AG04449 (cell line): ENCODE measurements at regions of chr2 and their contacts with region 1.

Region 1: DNA sequence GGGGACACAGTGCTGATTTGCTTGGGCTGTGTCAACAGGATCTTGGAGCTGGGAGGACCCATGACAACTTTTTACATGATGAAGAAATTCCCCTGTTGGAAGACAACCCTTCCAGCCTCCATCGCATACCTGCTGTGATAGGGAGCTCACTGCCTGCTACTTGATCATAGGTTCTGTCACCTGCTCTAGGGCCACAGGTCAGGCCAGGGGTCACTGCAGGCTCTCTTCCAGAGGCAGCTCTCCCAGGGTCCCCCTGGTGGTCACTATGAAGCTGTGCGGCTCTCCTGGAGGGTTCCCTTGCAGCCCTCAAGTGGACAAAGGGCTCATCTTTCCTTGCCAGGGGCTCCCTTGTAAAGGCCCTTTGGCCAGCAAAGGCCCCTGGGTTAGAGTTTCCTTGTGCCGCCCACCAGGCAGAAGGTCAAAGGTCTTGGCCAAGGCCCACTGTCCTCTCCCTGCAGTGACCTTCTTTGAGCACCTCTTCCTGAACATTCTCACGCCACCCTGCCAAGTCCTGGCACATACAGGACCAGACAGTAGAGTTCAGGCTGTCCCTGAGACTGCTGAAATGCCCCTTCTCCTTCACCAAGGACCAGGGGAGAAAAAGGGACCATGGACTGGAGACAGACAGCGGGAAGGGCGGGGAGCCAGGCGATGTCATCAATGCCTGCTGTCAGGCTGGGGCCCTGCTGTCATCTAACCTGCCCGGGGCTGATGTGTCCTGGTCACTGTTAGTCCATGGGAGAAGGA is 345.1 kb downstream of the DYSF start:
- DNase-seq: no peak
- H3K4me3 ChIP-seq: no peak overlapping the region
- CTCF ChIP-seq: peak; percentile 81

Region 2: DNA sequence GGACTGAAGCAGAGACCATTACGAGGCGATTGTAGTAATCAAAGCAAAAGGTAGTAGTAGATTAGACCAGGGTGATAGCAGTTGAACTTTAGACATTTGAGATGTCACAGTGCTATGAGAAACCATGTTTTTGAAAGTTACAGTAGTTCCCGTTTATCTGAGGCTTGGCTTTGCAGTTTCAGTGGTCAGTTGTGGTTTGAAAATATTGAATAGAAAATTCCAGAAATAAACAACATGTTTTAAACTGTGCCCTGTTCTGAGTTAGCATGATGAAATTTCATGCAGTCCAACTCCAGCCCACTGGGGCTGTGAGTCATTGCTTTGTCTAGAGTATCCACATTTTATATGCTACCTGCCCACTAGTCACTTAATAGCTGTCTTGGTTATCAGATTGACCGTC is 419.4 kb before region 1 on chr2:
- CTCF ChIA-PET with region 1: no interaction called
- POLR2A ChIA-PET with region 1: no interaction called
- DNase-seq: peak; percentile 21
- H3K4me3 ChIP-seq: no peak overlapping the region
- CTCF ChIP-seq: no peak

Region 3: GRCh38 chr2:71536226-71536671 is 262.2 kb before region 1 on chr2:
- CTCF ChIA-PET with region 1: interaction called, 15 read pairs
- POLR2A ChIA-PET with region 1: no interaction called
- DNase-seq: peak; percentile 47
- H3K4me3 ChIP-seq: no peak overlapping the region
- CTCF ChIP-seq: no peak

Region 4: DNA sequence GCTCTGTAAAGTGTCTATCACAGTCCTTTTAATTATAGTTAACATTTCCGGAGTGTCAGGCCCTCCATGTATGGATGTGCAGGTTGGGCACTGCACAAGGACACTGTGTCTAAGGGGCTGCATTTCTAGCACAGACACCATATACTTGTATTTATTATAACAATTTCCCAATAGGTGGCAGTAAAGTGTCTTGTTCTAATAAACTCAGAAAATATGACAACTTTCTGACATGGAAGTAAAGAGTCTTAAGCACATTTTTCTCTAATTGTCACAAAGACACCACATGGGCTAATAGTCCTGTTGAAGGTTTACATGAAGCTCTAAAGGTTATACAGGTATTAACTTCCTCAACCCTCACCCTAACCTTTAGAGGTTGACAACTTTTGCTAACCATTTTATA is 188.5 kb before region 1 on chr2:
- CTCF ChIA-PET with region 1: interaction called, 276 read pairs
- POLR2A ChIA-PET with region 1: no interaction called
- DNase-seq: peak; percentile 7
- H3K4me3 ChIP-seq: no peak overlapping the region
- CTCF ChIP-seq: peak; percentile 23

Region 5: DNA sequence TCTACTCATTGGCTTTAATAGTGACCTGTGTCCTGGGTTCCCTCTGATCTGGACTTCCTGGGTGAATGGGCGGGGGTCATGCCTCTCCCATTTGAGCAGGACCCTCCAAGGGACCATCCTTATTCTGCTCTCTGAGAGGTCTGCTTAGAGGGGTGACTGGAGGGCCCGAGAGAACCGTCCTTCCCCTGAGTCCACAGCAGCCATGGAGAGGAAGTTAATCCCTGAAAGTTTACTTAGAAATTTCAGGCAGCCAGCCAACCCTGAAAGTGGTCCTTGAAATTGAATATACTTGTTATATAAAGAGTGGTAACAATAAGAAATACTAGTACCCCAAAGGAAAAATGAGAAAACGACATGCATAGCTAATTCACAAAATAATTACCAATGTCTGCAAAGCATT is 118.9 kb before region 1 on chr2:
- CTCF ChIA-PET with region 1: no interaction called
- POLR2A ChIA-PET with region 1: no interaction called
- DNase-seq: no peak
- H3K4me3 ChIP-seq: no peak overlapping the region
- CTCF ChIP-seq: no peak

Region 6: GRCh38 chr2:71691747-71692501 is 106.5 kb before region 1 on chr2:
- CTCF ChIA-PET with region 1: interaction called, 17 read pairs
- POLR2A ChIA-PET with region 1: no interaction called
- DNase-seq: no peak
- H3K4me3 ChIP-seq: no peak overlapping the region
- CTCF ChIP-seq: peak; percentile 14

Region 7: DNA sequence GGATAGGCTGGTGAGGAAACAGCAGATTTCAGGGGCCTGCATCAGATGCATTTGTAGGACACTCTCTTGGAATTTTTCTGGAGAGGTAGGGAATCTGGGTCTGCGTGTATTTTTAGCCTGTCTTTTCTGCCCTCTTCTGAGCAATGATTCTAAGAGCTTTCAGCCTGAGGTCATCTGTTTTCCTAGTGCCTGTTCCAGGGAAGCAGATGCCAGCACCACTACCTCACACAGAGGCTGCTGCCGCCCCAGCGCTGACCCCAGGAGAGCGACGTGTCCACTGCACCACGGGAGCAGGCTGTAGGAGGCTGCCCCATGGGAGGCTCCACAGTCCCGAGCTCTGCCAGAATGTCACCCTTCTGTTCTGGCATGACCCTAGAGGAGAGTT is 32.7 kb after region 1 on chr2:
- CTCF ChIA-PET with region 1: interaction called, 37 read pairs
- POLR2A ChIA-PET with region 1: no interaction called
- DNase-seq: peak; percentile 90
- H3K4me3 ChIP-seq: no peak overlapping the region
- CTCF ChIP-seq: no peak

Region 8: DNA sequence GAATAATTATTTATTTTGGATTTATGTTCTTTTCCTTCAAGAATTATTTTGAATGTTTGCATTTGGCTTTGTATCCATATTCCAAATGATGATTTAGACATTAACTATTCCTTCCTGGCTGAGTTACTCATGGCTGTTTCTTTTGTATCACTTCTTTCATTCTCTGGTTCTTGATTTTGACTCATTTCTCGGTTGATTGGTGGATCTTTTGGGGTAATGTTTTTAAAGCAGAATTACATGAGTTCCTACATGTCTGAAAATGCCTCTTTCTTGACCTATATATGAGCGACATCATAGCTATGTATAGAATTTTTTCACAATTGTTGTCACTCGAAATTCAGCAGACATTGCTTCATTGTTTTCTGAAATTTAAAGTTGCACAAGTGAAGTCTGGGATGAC is 309.7 kb after region 1 on chr2:
- CTCF ChIA-PET with region 1: no interaction called
- POLR2A ChIA-PET with region 1: no interaction called
- DNase-seq: no peak
- H3K4me3 ChIP-seq: no peak overlapping the region
- CTCF ChIP-seq: no peak

Region 9: GRCh38 chr2:72137498-72138010 is 339.1 kb after region 1 on chr2:
- CTCF ChIA-PET with region 1: interaction called, 22 read pairs
- POLR2A ChIA-PET with region 1: no interaction called
- DNase-seq: no peak
- H3K4me3 ChIP-seq: no peak overlapping the region
- CTCF ChIP-seq: peak; percentile 96

Region 10: DNA sequence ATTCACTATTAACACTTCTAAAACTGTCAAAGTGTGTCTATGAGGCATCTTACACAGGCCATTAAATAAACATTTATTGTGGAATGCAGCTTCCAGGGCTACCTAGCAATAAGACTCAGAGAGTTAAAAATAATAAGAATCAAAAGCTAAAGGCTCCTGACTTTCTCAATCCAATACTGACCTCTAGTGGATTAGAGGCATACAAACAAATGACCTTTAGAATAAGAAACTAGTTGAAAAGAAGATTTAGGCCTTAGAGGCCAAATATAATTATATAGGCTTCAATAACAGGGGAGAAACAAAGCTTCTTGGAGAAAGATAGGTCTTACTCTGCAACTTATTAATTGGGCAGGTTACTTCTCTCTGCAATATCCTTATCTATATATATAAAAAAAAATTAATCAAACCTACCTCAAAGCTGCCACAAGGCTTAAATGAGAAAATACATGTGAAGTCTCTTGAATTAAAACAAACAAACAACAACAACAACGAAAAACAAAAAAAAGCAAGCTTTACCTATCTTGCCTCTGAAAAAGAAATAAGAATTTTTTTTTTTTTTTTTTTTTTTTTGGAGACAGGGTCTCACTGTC is 781.2 kb after region 1 on chr2:
- CTCF ChIA-PET with region 1: interaction called, 50 read pairs
- POLR2A ChIA-PET with region 1: no interaction called
- DNase-seq: no peak
- H3K4me3 ChIP-seq: no peak overlapping the region
- CTCF ChIP-seq: peak; percentile 33